Spleen (tissue), 13 donors: ENCODE measurements at regions of chr2 and their contacts with region 1.

Region 1: DNA sequence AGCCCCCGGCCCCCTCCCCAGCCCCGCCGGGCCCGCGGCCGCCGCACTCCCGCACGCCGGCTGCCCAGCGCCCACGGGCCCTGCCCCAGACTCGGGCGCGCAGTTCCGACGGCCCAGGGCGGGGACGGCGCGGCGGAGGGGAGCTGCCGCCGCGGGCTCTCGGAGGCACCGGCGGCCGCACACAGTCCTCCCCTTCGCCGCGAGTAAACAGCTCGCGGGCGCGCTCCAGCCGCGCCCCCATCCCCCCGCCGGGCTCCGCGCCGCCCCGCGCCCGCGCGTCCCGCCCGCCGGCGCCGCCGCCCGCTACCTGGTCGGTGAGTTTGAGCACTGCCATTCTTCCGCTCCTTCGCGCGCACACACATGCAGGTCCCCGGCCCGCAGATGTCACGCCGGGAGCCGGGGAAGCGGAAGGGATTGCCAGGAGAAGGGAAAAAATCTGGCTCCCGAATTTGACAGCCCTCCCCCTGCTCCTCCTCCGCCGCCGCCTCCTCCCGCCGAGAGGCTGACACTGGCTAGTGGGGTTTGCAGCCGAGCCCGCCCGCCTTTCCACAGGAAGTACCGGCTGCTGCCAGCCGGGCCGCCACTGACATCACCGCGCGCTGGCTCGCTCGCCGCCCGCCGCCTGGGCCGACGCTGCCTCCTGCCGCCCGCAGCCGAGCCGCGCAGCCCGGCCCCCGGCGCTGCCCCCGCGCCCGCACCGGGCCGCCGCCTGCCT is at the start of gene ANKRD44:
- DNase-seq: peak; percentile 99
- H3K4me3 ChIP-seq: peak within 1 kb of the TSS; percentile 53 to 87 (median 69)
- H3K27ac ChIP-seq: peak within 1 kb of the TSS; percentile 87 to 98 (median 96)
- H3K4me1 ChIP-seq: peaks cover 15 to 64% (median 49%) of the 10 kb centered on the region in 6 donors
- H3K27me3 ChIP-seq: no peaks in the 10 kb centered on the region
- CTCF ChIP-seq: peak in 9 of 11 experiments; percentile 43 to 73 (median 60)
- POLR2A ChIP-seq: peak in 2 of 3 donors; percentile 56 to 84
- total RNA-seq, gene ANKRD44: 108 to 183 (median 145) TPM

Region 2: GRCh38 chr2:197113275-197113711 is 197.1 kb before region 1 on chr2:
- intact Hi-C with region 1: loop called (anchors 5 kb)
- DNase-seq: no peak
- H3K4me3 ChIP-seq: no peak overlapping the region
- H3K27ac ChIP-seq: peak overlapping the region in 5 of 8 donors; percentile 11 to 74 (median 49)
- H3K4me1 ChIP-seq: peaks cover 7 to 66% (median 26%) of the 10 kb centered on the region in 6 donors
- H3K27me3 ChIP-seq: no peaks in the 10 kb centered on the region
- CTCF ChIP-seq: peak; percentile 40 to 76 (median 67)
- POLR2A ChIP-seq: no peak

Region 3: GRCh38 chr2:197191177-197191939 is 119.1 kb before region 1 on chr2:
- intact Hi-C with region 1: loop called (anchors 5 kb)
- DNase-seq: no peak
- H3K4me3 ChIP-seq: no peak overlapping the region
- H3K27ac ChIP-seq: peak overlapping the region in 6 of 8 donors; percentile 13 to 75 (median 53)
- H3K4me1 ChIP-seq: peaks cover 19 to 93% (median 50%) of the 10 kb centered on the region in 6 donors
- H3K27me3 ChIP-seq: no peaks in the 10 kb centered on the region
- CTCF ChIP-seq: peak; percentile 59 to 82 (median 76)
- POLR2A ChIP-seq: no peak

Region 4: DNA sequence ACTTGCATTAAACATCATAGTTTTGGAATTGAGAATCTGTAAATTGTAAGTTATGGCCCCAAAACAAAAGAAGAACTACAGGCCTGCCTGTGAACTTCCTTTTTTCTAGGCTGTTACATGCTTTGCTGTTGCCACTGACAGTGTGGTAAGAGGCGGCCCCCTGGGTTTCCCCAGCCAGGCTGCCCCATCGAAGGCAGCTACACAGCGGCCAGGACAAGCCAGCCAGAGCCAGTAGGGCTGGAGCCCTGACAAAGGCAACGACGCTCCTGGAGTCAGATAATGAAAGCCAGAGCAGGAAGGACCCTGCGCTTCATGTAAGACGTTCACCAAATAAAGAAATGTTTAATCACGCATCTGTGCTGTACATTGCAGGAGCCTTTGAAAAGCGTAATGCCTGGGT is 54.9 kb before region 1 on chr2:
- intact Hi-C with region 1: loop called (anchors 2 kb)
- DNase-seq: peak; percentile 96
- H3K4me3 ChIP-seq: peak overlapping the region in 3 of 8 donors; percentile 5 to 51 (median 8)
- H3K27ac ChIP-seq: peak overlapping the region; percentile 74 to 92 (median 88)
- H3K4me1 ChIP-seq: peaks cover 47 to 94% (median 75%) of the 10 kb centered on the region in 6 donors
- H3K27me3 ChIP-seq: no peaks in the 10 kb centered on the region
- CTCF ChIP-seq: peak in 3 of 11 experiments; percentile 10 to 22 (median 19)
- POLR2A ChIP-seq: peak in 1 of 3 donors; percentile 47

Region 5: GRCh38 chr2:197615016-197615652 is 304.7 kb after region 1 on chr2:
- intact Hi-C with region 1: no loop called
- DNase-seq: no peak
- H3K4me3 ChIP-seq: no peak overlapping the region
- H3K27ac ChIP-seq: no peak overlapping the region
- H3K4me1 ChIP-seq: peaks cover 0 to 10% (median 0%) of the 10 kb centered on the region in 6 donors
- H3K27me3 ChIP-seq: no peaks in the 10 kb centered on the region
- CTCF ChIP-seq: no peak
- POLR2A ChIP-seq: no peak